WTC11 (cell line): ENCODE measurements at regions of chr11 and their contacts with region 1.

Region 1: GRCh38 chr11:61627567-61628445 is 46.9 kb upstream of the SYT7 start:
- DNase-seq: peak; percentile 87
- ATAC-seq: peak; percentile 79
- H3K4me3 Mint-ChIP-seq: no peak overlapping the region
- H3K27ac Mint-ChIP-seq: peak overlapping the region; percentile 70
- H3K4me1 Mint-ChIP-seq: peaks cover 50% of the 10 kb centered on the region
- H3K27me3 Mint-ChIP-seq: no peaks in the 10 kb centered on the region
- CTCF ChIP-seq: peak; percentile 92

Region 2: GRCh38 chr11:61581030-61581928 is 46.5 kb before region 1 on chr11 and contains the start of gene SYT7:
- CTCF ChIA-PET with region 1: interaction called, 86 read pairs
- POLR2A ChIA-PET with region 1: no interaction called
- DNase-seq: peak; percentile 99
- ATAC-seq: peak; percentile 83
- H3K4me3 Mint-ChIP-seq: peak within 1 kb of the TSS; percentile 79
- H3K27ac Mint-ChIP-seq: no peak within 1 kb of the TSS
- H3K4me1 Mint-ChIP-seq: peaks cover 56% of the 10 kb centered on the region
- H3K27me3 Mint-ChIP-seq: peaks cover 61% of the 10 kb centered on the region
- CTCF ChIP-seq: no peak; the same call in 1 of the 2 replicates
- total RNA-seq, gene SYT7: 12.5 to 18.9 TPM (median 18.2 TPM) in 3 replicates

Region 3: GRCh38 chr11:61609980-61610366 is 17.8 kb before region 1 on chr11:
- CTCF ChIA-PET with region 1: interaction called, 28 read pairs
- POLR2A ChIA-PET with region 1: no interaction called
- DNase-seq: peak; percentile 67
- ATAC-seq: peak; percentile 93
- H3K4me3 Mint-ChIP-seq: no peak overlapping the region
- H3K27ac Mint-ChIP-seq: no peak overlapping the region
- H3K4me1 Mint-ChIP-seq: peaks cover 21% of the 10 kb centered on the region
- H3K27me3 Mint-ChIP-seq: peaks cover 2% of the 10 kb centered on the region; the same call in 1 of the 2 replicates
- CTCF ChIP-seq: no peak